HCT116 (cell line): ENCODE measurements at regions of chr17 and their contacts with region 1.

Region 1: DNA sequence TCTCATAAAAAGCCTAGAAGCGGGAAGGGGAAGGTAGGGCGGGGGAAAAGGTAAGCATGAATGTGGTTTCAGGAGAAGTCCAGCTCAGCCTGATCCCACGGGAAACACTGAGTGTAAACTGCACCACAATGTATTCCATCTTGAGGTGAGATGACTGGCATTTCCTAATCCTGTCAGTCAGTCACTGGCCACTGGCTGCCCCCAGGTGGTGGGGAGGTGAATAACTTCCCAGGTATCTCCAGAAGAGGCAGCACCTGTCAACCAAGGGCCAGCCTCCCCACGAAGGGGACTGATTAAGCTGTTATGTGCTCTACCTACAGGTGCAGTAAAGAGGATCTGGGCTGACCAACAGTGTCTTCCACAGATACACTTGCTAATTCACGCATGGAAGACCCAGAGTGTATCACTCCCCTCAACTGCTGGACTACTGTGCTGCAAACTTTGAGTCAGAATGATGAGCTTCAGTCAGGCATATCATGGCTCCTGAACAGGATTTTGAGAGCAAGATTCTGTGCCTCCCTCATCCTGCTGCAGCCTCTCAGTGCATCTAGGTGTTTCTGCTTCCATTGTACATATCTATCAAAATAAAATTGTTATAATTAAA is 108.5 kb upstream of the CCL2 start:
- DNase-seq: no peak
- ATAC-seq: peak; percentile 72
- H3K4me3 ChIP-seq: no peak overlapping the region
- H3K27ac ChIP-seq: no peak overlapping the region
- H3K4me1 ChIP-seq: no peaks in the 10 kb centered on the region
- H3K27me3 ChIP-seq: no peaks in the 10 kb centered on the region
- CTCF ChIP-seq: peak in 2 of 3 experiments; percentile 61 to 62; a peak in 4 of 6 replicates
- POLR2A ChIP-seq: no peak
- RAD21 ChIP-seq: 0 out of 2 replicates have a peak, but pooled peaks have one; percentile 11

Region 2: DNA sequence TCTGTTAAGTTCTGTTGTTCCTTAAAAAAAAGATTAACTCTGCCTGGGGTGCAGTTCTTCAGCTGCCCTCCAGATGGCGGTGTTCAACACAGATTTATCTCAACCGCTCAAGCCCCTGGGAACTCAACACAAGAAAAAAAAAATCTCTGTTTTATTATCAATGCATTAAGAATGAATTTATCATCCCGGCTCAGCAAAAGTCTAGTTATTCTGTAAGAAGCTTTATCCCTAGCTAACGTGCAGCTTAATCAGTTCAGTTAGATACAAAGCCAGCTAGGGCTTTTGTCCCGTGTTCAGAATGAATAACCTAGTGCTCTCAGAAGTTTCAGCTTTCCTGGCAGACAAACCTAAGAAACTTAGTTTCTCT is 367.3 kb before region 1 on chr17:
- CTCF ChIA-PET with region 1: no interaction called
- POLR2A ChIA-PET with region 1: no interaction called
- RAD21 ChIA-PET with region 1: no interaction called
- intact Hi-C with region 1: loop called (anchors 2 kb)
- DNase-seq: peak; percentile 15
- ATAC-seq: 0 out of 2 replicates have a peak, but pooled peaks have one; percentile 22
- H3K4me3 ChIP-seq: no peak overlapping the region
- H3K27ac ChIP-seq: no peak overlapping the region
- H3K4me1 ChIP-seq: no peaks in the 10 kb centered on the region
- H3K27me3 ChIP-seq: no peaks in the 10 kb centered on the region
- CTCF ChIP-seq: peak; percentile 32 to 90 (median 77); a peak in 5 of 6 replicates
- POLR2A ChIP-seq: no peak
- RAD21 ChIP-seq: peak; percentile 40; the same call in 1 of the 2 replicates

Region 3: GRCh38 chr17:33964344-33964979 is 182.1 kb before region 1 on chr17:
- CTCF ChIA-PET with region 1: no interaction called
- POLR2A ChIA-PET with region 1: no interaction called
- RAD21 ChIA-PET with region 1: no interaction called
- intact Hi-C with region 1: no loop called
- DNase-seq: no peak
- ATAC-seq: no peak
- H3K4me3 ChIP-seq: no peak overlapping the region
- H3K27ac ChIP-seq: no peak overlapping the region
- H3K4me1 ChIP-seq: no peaks in the 10 kb centered on the region
- H3K27me3 ChIP-seq: no peaks in the 10 kb centered on the region
- CTCF ChIP-seq: no peak
- POLR2A ChIP-seq: no peak
- RAD21 ChIP-seq: no peak

Region 4: DNA sequence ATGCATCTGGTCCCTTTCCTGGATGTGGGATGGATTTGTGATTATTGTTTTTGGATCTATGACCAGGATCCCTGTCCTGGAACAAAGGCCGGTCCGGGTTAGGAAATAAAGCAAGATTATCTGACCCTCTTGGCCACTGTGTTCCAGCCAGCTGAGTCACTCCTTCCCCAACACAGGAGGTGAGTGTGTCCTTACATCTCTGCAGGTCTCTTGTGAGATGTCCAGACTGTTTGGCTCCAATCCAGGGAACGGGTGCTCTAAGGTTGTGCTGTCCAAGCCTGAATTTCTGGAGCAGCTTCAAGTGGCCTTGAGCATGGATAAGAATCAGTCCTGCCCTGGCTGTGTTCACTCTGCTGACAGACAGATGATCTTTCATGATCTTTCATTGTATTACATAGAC is 28.0 kb before region 1 on chr17:
- CTCF ChIA-PET with region 1: no interaction called
- POLR2A ChIA-PET with region 1: no interaction called
- RAD21 ChIA-PET with region 1: no interaction called
- intact Hi-C with region 1: no loop called
- DNase-seq: no peak
- ATAC-seq: no peak
- H3K4me3 ChIP-seq: no peak overlapping the region
- H3K27ac ChIP-seq: no peak overlapping the region
- H3K4me1 ChIP-seq: no peaks in the 10 kb centered on the region
- H3K27me3 ChIP-seq: no peaks in the 10 kb centered on the region
- CTCF ChIP-seq: no peak
- POLR2A ChIP-seq: no peak
- RAD21 ChIP-seq: no peak